Activated CD4-positive, alpha-beta memory T cell treated with anti-CD3 and anti-CD28 coated beads for 36 hours (primary cell): ENCODE measurements at regions of chr2 and their contacts with region 1.

Region 1: DNA sequence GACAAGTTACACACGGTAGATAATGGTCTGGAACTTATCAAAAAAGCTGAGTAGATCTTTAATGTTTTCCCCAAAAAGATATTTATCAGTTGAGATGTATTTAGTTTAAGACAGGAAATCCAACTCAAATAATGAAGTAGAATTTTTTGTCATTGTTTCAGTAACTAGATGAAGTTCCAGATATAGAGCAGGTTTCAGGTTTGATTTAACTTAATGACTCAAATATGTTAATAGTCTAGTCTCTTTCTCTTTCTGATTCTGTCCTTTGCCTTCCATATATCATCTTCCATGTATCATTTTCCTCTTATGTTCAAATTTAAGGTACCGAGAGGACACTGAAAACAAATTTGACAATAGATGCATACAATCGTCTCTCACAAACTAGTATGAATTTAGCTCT is 23.6 kb upstream of the DOCK10 start:
- DNase-seq: no peak
- H3K4me3 Mint-ChIP-seq: no peak overlapping the region
- H3K27ac Mint-ChIP-seq: no peak overlapping the region
- H3K4me1 Mint-ChIP-seq: peaks cover 40% of the 10 kb centered on the region
- H3K27me3 Mint-ChIP-seq: no peaks in the 10 kb centered on the region

Region 2: GRCh38 chr2:224650815-224651439 is 415.0 kb before region 1 on chr2:
- CTCF ChIA-PET with region 1: no interaction called
- POLR2A ChIA-PET with region 1: no interaction called
- intact Hi-C with region 1: no loop called
- DNase-seq: no peak
- H3K4me3 Mint-ChIP-seq: no peak overlapping the region
- H3K27ac Mint-ChIP-seq: no peak overlapping the region
- H3K4me1 Mint-ChIP-seq: peaks cover 2% of the 10 kb centered on the region
- H3K27me3 Mint-ChIP-seq: peaks cover 1% of the 10 kb centered on the region

Region 3: DNA sequence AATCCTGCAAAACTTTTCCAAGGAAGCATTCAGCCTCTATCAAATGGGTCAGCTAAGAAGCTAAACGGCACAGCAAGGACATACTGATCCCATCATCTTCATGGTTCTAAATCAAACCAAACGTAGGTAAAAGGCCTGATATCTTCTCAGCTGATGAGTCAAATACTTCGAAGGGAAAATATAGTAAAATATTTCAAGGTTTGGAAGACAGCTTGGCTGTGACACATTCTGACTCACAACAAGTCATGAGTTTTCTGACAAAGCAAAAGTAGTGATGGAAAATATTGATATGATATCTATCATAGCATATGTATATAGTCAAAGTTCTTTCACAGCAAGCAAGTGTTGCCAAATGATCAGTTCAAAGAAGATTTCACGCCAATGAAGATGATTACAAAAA is 55.1 kb before region 1 on chr2:
- CTCF ChIA-PET with region 1: no interaction called
- POLR2A ChIA-PET with region 1: no interaction called
- intact Hi-C with region 1: loop called (anchors 2 kb)
- DNase-seq: no peak
- H3K4me3 Mint-ChIP-seq: no peak overlapping the region
- H3K27ac Mint-ChIP-seq: peak overlapping the region; percentile 78
- H3K4me1 Mint-ChIP-seq: peaks cover 93% of the 10 kb centered on the region
- H3K27me3 Mint-ChIP-seq: no peaks in the 10 kb centered on the region

Region 4: DNA sequence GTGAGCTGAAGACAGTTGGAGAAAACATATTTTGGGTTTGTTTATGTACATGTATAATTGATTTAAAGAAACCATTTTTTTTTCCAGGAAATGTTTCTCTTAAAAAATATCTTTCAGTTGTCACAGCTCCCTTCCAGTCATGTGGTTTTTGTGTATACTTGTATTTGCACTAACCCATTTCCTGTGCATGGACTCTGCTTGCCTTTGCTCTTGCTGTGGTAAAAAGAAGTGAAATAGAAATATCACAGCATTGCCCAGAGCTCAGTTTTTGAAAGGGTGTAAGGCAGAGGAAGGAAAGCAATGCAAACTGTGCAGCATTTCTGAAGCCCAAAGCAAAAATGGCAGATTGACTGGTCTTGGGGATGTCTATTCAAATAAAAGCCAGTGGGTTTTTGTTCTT is 13.2 kb before region 1 on chr2:
- CTCF ChIA-PET with region 1: interaction called, 3 read pairs
- POLR2A ChIA-PET with region 1: no interaction called
- intact Hi-C with region 1: loop called (anchors 1 kb)
- DNase-seq: no peak
- H3K4me3 Mint-ChIP-seq: no peak overlapping the region
- H3K27ac Mint-ChIP-seq: peak overlapping the region; percentile 57
- H3K4me1 Mint-ChIP-seq: peaks cover 59% of the 10 kb centered on the region
- H3K27me3 Mint-ChIP-seq: no peaks in the 10 kb centered on the region

Region 5: GRCh38 chr2:225100856-225101294 is 35.0 kb after region 1 on chr2:
- CTCF ChIA-PET with region 1: no interaction called
- POLR2A ChIA-PET with region 1: no interaction called
- intact Hi-C with region 1: no loop called
- DNase-seq: no peak
- H3K4me3 Mint-ChIP-seq: no peak overlapping the region
- H3K27ac Mint-ChIP-seq: no peak overlapping the region
- H3K4me1 Mint-ChIP-seq: no peaks in the 10 kb centered on the region
- H3K27me3 Mint-ChIP-seq: no peaks in the 10 kb centered on the region